ENCODE measurements at regions of chr11 and their contacts with region 1.

Region 1: GRCh38 chr11:134139873-134140331 is 71.0 kb downstream of the JAM3 start:
- DNase-seq: peak; percentile 65 to 87
- H3K4me3 ChIP-seq: no peak overlapping the region
- CTCF ChIP-seq: peak in 1 of 3 donors; percentile 30
- POLR2A ChIP-seq: no peak

Region 2: GRCh38 chr11:133927690-133928627 is 211.9 kb before region 1 on chr11:
- intact Hi-C with region 1: loop called (anchors 10 kb)
- DNase-seq: peak; percentile 61 to 93
- H3K4me3 ChIP-seq: no peak overlapping the region
- CTCF ChIP-seq: peak in 1 of 3 donors; percentile 71
- POLR2A ChIP-seq: no peak

Region 3: DNA sequence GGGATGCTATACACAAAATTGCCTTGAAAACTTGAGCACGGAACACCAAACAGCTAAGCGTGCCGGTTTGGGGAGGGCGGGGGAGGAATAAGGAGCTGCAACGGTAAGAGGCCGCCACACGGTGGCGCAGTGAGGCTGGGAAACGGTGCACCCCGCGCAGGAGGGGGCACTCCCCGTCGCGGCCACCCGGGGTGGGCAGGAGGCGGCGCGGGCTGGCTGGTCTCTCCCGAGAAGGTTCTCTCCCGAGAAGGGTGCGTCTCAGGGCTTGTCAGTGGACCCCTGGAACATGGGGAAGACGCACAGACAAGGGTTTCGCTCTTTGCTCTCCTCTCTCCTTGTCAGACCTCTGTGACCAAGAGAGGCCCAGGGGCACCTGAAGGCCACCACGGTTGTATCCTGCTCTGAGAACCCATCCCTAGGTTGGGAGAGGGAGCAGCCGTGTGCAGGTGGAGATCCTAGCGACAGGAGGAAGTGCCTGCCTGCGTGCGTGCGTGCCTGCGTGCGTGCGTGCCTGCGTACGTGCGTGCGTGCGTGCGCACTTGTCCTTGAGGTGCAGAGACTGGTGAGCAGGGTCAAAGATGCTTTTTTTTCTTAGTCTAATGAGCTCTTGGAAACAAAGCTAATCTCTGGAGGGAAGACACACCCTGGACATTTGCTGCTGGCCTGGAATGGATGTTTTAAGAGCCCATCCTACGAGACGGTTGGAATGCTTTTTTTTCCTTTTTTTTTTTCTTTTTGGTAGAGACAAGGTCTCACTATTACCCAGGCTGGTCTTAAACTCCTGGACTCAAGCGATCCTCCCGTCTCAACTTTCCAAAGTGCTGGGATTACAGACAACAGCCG is 89.1 kb before region 1 on chr11:
- intact Hi-C with region 1: loop called (anchors 5 kb)
- DNase-seq: peak in 1 of 2 donors; percentile 94
- H3K4me3 ChIP-seq: no peak overlapping the region
- CTCF ChIP-seq: peak in 1 of 3 donors; percentile 32
- POLR2A ChIP-seq: no peak

Measured in lower leg skin (tissue), 4 donors.